Panc1 (cell line): ENCODE measurements at regions of chr6 and their contacts with region 1.

Region 1: DNA sequence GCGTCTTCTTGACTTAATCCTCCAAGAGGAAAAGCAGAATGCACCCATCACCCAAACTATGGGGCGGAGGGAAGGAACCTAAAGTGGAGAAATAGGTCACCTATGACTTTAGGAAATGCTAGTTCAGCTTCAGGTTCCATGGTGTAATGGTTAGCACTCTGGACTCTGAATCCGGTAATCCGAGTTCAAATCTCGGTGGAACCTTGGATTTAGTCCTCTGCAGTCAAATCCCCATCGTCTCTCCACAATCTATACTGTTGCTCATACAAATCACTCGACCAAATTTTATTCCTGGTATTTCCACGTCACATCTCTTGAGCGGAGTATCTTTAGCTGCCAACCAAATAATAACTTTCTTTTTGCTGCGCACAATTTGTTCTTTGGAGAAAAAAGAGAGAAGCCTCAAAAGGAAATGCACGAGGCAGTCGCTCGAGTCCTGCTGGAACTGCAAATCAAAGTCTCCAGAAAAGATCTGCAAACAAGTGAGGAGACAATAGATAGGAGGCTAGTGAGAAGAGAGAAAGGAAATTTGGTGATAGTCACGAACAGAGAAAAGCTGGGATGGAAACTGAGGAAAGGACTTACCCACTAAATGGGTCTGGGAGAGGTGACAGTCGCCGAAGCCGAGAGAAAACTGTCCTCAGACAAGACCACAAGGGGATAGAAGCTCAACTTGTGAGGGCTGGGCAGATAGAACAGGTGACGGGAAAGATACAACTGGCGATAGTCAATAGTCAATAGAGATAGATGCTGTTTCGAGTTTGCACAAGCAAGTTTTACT is 16.6 kb downstream of the POM121L2 start:
- DNase-seq: peak; percentile 95
- ATAC-seq: peak; percentile 81
- H3K4me3 ChIP-seq: peak overlapping the region; percentile 83 to 97
- H3K27ac ChIP-seq: peak overlapping the region; percentile 55; the same call in 1 of the 2 replicates
- H3K4me1 ChIP-seq: peaks cover 29% of the 10 kb centered on the region
- H3K27me3 ChIP-seq: no peaks in the 10 kb centered on the region
- CTCF ChIP-seq: no peak

Region 2: DNA sequence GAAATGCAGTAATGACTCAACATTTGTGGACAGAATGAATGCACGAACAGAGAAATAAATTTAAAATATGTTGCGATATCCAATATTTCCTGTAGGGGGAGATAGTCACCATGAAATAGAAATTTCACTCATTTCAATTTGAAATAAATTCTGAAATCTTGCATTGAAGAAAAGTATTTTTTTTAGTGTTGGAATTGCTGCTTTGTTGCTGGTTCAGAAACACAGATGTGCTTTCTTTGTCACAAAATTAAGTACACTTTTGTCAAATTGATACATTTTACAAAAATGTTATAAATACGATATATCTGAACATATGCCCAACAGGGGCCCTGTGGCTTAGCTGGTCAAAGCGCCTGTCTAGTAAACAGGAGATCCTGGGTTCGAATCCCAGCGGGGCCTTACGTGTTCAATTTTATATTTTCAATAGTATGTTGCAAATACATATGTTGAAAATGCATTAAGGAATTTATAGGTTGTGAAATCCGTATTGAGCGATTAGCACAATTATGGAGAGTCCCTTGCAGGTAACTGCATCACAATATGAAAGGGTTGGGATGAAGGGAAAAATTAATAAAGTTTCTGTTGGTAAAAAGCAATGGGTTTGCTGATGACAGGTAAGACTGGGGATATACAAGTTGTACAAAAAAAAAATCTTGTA is 133.4 kb before region 1 on chr6:
- CTCF ChIA-PET with region 1: no interaction called
- POLR2A ChIA-PET with region 1: interaction called, 3 read pairs
- in situ Hi-C with region 1: no loop called
- intact Hi-C with region 1: loop called (anchors 5 kb)
- DNase-seq: peak; percentile 81
- ATAC-seq: peak; percentile 61
- H3K4me3 ChIP-seq: peak overlapping the region; percentile 22 to 26; a peak in 2 of 4 replicates
- H3K27ac ChIP-seq: no peak overlapping the region; the same call in 1 of the 2 replicates
- H3K4me1 ChIP-seq: peaks cover 4% of the 10 kb centered on the region; the same call in 1 of the 2 replicates
- H3K27me3 ChIP-seq: no peaks in the 10 kb centered on the region
- CTCF ChIP-seq: peak; percentile 76; the same call in 1 of the 2 replicates

Region 3: DNA sequence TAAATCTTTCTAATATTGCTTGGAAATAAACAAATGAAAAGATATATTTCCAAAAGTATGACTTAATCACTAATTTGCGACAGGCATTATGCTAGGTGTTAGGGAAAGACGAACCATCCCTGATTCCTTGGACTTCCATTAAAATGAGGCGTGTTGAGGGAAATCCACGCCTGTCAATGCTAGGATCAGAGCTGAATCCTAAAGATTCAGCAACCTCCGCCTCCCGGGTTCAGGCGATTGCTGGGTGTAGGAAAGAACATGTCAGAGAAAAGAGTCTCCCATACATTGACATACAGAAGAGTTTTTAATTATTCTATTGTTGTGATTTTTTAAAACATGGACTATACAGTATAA is 64.8 kb before region 1 on chr6:
- CTCF ChIA-PET with region 1: no interaction called
- POLR2A ChIA-PET with region 1: no interaction called
- in situ Hi-C with region 1: no loop called
- intact Hi-C with region 1: loop called (anchors 2 kb)
- DNase-seq: no peak
- ATAC-seq: peak; percentile 68
- H3K4me3 ChIP-seq: peak overlapping the region; percentile 53 to 87
- H3K27ac ChIP-seq: 0 out of 2 replicates have a peak overlapping the region, but pooled peaks have one; percentile 31
- H3K4me1 ChIP-seq: peaks cover 3% of the 10 kb centered on the region; the same call in 1 of the 2 replicates
- H3K27me3 ChIP-seq: no peaks in the 10 kb centered on the region; the same call in 1 of the 2 replicates
- CTCF ChIP-seq: no peak

Region 4: GRCh38 chr6:27460701-27461100 is 165.2 kb after region 1 on chr6:
- CTCF ChIA-PET with region 1: no interaction called
- POLR2A ChIA-PET with region 1: no interaction called
- in situ Hi-C with region 1: no loop called
- intact Hi-C with region 1: no loop called
- DNase-seq: no peak
- ATAC-seq: no peak
- H3K4me3 ChIP-seq: no peak overlapping the region
- H3K27ac ChIP-seq: no peak overlapping the region
- H3K4me1 ChIP-seq: no peaks in the 10 kb centered on the region
- H3K27me3 ChIP-seq: no peaks in the 10 kb centered on the region
- CTCF ChIP-seq: no peak